ENCODE measurements at regions of chr12 and their contacts with region 1.

Region 1: GRCh38 chr12:8860165-8860961 is 37.9 kb downstream of the A2ML1 start:
- DNase-seq: peak; percentile 43
- CTCF ChIP-seq: peak; percentile 74

Region 2: DNA sequence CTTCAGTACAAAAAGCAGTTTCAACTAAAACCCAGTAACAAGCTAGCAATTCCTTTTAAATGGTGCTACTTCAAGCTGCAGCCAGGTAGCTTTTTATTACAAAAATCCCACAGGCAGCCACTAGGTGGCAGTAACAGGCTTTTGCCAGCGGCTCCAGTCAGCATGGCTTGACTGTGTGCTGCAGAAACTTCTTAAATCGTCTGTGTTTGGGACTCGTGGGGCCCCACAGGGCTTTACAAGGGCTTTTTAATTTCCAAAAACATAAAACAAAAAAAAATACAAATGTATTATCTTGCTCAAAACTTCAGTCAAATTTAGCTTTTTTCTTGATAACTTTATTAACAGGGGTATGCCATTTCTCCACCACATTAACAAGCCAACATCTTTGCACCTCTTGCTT is 316.1 kb before region 1 on chr12:
- in situ Hi-C with region 1: loop called (anchors 25 kb)
- DNase-seq: peak; percentile 72
- CTCF ChIP-seq: peak; percentile 82

Region 3: GRCh38 chr12:8697476-8698131 is 162.8 kb before region 1 on chr12 and contains the start of gene RIMKLB:
- in situ Hi-C with region 1: loop called (anchors 25 kb)
- DNase-seq: peak; percentile 91
- CTCF ChIP-seq: no peak

Region 4: DNA sequence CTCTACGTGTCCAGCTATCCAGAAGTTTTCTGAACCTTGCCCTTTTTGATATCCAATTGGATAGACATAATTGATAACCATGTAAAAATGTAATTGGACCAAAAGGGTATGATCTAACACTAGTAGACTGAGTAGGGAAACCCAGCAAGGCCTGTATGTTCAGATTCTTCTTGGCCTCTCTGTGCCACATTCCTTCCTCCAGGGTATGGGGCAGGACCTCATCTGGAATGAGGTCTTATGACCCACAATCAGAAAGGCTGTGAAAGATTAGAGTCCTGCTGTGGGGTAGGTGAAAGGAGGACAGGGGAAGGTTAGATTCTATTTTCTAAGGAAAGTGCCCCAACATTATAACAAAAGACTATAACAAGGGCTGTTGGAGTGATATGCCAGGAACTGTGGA is 89.3 kb before region 1 on chr12:
- in situ Hi-C with region 1: no loop called
- DNase-seq: no peak
- CTCF ChIP-seq: no peak

Region 5: DNA sequence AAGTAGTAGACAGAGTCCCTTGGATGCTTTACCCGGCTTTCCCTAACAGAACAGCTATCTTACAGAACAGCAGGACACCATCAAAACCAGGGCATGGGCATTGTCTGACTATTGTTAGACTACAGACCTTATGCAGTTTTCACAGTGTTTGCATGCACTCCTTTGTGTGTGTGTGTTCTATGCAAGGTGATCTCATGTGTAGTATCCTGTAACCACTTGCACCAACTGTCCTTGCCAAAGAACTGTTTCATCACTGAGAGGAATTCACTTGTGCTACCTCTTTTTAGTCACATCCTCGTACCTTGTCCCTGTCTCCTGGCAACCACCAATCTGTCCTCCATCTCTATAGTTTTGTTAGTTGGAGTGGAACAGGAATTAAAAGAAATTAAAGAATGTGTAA is 531.5 kb after region 1 on chr12:
- in situ Hi-C with region 1: no loop called
- DNase-seq: no peak
- CTCF ChIP-seq: no peak